ENCODE measurements at regions of chr9 and their contacts with region 1.

Region 1: GRCh38 chr9:89639846-89640805 is 35.3 kb downstream of the GADD45G start:
- DNase-seq: no peak
- H3K4me3 ChIP-seq: peak overlapping the region in 1 of 2 donors; percentile 8
- H3K27ac ChIP-seq: peak overlapping the region; percentile 8 to 82
- H3K4me1 ChIP-seq: peaks cover 34% of the 10 kb centered on the region
- H3K27me3 ChIP-seq: no peaks in the 10 kb centered on the region
- CTCF ChIP-seq: no peak
- POLR2A ChIP-seq: no peak

Region 2: DNA sequence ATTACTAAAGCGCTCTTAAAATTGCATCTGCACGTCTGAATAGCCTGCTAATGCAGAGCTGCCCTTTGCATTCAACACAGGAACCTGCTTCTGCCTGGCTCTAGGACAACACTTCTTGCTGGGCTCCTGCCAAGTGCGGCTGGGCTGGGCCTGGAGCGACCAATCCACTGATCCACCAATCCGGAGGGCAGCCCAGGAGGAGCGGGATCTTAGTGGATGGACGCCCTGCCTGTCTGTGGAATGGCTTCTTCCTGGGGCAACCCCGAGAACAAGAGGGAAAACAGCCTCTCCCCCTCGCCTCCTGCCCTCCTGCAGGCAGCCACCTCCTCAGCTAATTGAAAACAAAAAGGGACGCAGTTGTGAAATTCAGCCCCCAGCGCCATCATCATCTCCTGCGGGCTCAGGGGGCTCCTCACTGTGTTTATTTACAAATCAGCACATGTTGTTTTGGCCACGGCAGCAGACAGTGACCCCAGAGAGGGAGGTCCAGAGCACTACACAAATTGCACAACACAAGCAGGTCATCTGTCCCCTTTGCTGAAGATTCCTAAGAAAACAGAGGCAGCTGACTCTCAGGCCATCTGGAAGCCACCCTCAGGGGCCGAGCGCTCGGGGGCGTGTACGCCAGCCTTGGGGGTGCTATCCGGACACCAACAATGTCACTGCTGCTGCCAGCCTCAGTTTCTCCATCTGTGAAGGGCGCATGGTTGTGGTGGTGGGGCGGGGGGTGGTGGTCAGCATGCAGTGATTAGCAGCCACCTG is 22.0 kb after region 1 on chr9:
- intact Hi-C with region 1: loop called (anchors 2 kb)
- DNase-seq: peak; percentile 99
- H3K4me3 ChIP-seq: peak overlapping the region; percentile 3 to 34
- H3K27ac ChIP-seq: peak overlapping the region; percentile 53 to 82
- H3K4me1 ChIP-seq: peaks cover 27% of the 10 kb centered on the region
- H3K27me3 ChIP-seq: no peaks in the 10 kb centered on the region
- CTCF ChIP-seq: no peak
- POLR2A ChIP-seq: no peak

Region 3: GRCh38 chr9:89835666-89836065 is 195.5 kb after region 1 on chr9:
- intact Hi-C with region 1: no loop called
- DNase-seq: no peak
- H3K4me3 ChIP-seq: no peak overlapping the region
- H3K27ac ChIP-seq: no peak overlapping the region
- H3K4me1 ChIP-seq: peaks cover 10% of the 10 kb centered on the region
- H3K27me3 ChIP-seq: no peaks in the 10 kb centered on the region
- CTCF ChIP-seq: no peak
- POLR2A ChIP-seq: no peak